ENCODE measurements at regions of chr12 and their contacts with region 1.

Region 1: DNA sequence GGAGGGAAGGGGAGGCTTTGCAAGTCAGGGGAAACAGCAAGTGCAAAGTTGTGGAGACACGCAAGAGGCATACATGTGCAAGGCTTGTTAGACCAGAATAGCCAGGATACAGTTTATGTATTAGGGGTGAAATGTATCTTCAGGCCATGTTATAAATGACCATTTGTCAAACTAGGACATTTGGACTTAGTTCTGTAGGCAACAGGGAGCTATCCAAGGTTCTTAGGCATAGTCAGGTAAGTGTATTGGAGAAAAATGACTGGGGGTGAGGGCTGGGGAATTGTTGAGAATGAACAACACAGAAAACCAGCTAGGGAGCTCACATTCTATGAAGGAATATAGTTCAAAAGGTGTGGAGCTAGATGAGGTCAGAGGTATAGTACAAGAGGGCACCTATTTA is 42.5 kb downstream of the TPH2 start:
- DNase-seq: no peak
- H3K4me3 ChIP-seq: no peak overlapping the region
- H3K27ac ChIP-seq: no peak overlapping the region
- H3K4me1 ChIP-seq: no peaks in the 10 kb centered on the region
- H3K27me3 ChIP-seq: no peaks in the 10 kb centered on the region
- CTCF ChIP-seq: no peak
- POLR2A ChIP-seq: no peak

Region 2: GRCh38 chr12:71183018-71183417 is 798.1 kb before region 1 on chr12:
- intact Hi-C with region 1: loop called (anchors 10 kb)
- DNase-seq: no peak
- H3K4me3 ChIP-seq: no peak overlapping the region
- H3K27ac ChIP-seq: no peak overlapping the region
- H3K4me1 ChIP-seq: no peaks in the 10 kb centered on the region
- H3K27me3 ChIP-seq: no peaks in the 10 kb centered on the region
- CTCF ChIP-seq: no peak
- POLR2A ChIP-seq: no peak